ENCODE measurements at regions of chr17 and their contacts with region 1.

Region 1: GRCh38 chr17:74646231-74646630 is 22.7 kb upstream of the CD300E start:
- DNase-seq: no peak
- H3K4me3 ChIP-seq: no peak overlapping the region
- H3K27ac ChIP-seq: no peak overlapping the region
- H3K4me1 ChIP-seq: no peaks in the 10 kb centered on the region
- H3K27me3 ChIP-seq: no peaks in the 10 kb centered on the region
- CTCF ChIP-seq: peak in 5 of 6 experiments; percentile 38 to 70 (median 62)
- POLR2A ChIP-seq: no peak

Region 2: DNA sequence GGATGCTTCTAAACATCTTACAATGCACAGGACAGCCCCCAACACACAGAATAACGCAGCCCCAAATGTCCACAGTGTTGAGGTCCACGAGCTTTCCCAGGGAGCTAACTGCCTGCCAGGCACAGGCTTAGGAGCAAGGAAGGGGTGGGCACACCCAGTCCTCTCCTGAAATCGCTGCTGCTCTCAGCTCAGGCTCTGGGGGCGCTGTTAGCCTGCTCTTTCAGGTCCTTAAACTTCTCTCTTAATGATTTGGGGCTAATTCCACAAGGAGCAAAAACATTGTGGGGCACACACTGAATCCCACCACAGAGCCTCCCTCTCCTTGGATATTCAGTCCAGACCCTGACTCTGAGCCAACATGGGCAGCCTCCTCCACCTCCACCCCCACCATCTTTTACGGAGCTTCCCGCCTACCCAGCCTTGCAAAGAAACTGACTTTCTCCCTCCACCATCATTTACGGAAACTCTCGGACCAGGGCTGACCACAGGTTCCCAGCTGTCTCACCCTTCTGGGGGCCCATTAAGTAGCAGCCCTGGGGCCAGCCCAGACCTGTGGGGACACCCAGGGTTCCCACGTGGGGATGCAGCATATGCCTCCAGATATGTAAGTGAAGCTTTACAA is 80.0 kb before region 1 on chr17:
- intact Hi-C with region 1: loop called (anchors 5 kb)
- DNase-seq: peak; percentile 59 to 60
- H3K4me3 ChIP-seq: no peak overlapping the region
- H3K27ac ChIP-seq: no peak overlapping the region
- H3K4me1 ChIP-seq: no peaks in the 10 kb centered on the region
- H3K27me3 ChIP-seq: no peaks in the 10 kb centered on the region
- CTCF ChIP-seq: peak in 4 of 6 experiments; percentile 41 to 66 (median 62)
- POLR2A ChIP-seq: no peak

Measured in thyroid gland (tissue), 4 donors.